Calu3 (cell line): ENCODE measurements at regions of chr2 and their contacts with region 1.

Region 1: DNA sequence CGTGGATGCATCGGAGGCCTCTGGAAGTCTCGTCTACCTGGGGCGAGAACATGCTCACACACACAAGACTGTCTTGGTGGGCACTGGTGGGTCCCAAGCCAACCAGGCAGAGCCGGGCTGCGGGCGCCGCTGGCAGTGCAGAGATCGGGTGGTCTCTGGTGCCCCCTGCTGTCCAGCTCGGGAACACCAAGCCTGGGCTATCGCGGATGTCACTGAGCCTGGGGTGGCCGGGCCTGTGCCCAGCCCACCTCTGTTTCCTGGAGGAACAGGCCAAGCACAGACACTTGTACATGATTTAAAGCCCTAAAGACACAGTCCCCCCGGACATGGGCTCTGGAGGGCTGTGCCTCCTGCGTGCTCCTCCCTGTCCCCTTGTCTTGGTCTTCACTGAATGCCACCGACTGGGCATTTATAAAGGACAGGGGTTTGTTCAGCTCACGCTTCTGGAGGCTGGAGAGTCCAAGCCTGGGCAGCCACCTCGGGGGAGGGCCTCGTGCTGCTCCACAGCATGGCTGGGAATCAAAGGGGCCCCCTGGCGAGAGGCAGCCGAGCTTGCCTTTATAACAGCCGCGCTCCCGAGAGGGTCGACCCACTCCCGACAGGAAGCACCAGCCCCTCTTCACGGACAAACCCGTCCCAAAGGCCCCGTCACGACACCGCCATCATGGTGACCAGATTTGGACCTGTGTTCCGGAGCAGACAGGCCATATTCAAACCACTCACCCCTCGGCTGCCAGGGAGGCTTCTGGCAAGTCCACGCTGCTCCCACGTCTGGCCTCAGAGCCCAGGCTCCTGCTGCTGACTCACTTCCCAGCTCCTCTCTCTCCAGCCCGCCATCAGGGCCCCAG is 3.6 kb upstream of the OTOS start:
- DNase-seq: peak; percentile 88
- H3K4me3 Mint-ChIP-seq: no peak overlapping the region
- H3K27ac Mint-ChIP-seq: no peak overlapping the region
- H3K4me1 Mint-ChIP-seq: no peaks in the 10 kb centered on the region
- H3K27me3 Mint-ChIP-seq: peaks cover 98% of the 10 kb centered on the region
- CTCF ChIP-seq: peak; percentile 94

Region 2: GRCh38 chr2:240060977-240061591 is 82.9 kb before region 1 on chr2:
- CTCF ChIA-PET with region 1: interaction called, 24 read pairs
- intact Hi-C with region 1: loop called (anchors 1 kb)
- DNase-seq: peak; percentile 62
- H3K4me3 Mint-ChIP-seq: no peak overlapping the region
- H3K27ac Mint-ChIP-seq: no peak overlapping the region
- H3K4me1 Mint-ChIP-seq: no peaks in the 10 kb centered on the region
- H3K27me3 Mint-ChIP-seq: peaks cover 98% of the 10 kb centered on the region
- CTCF ChIP-seq: peak; percentile 43